Cardiac septum (tissue), 1 donor: ENCODE measurements at regions of chr14 and their contacts with region 1.

Region 1: DNA sequence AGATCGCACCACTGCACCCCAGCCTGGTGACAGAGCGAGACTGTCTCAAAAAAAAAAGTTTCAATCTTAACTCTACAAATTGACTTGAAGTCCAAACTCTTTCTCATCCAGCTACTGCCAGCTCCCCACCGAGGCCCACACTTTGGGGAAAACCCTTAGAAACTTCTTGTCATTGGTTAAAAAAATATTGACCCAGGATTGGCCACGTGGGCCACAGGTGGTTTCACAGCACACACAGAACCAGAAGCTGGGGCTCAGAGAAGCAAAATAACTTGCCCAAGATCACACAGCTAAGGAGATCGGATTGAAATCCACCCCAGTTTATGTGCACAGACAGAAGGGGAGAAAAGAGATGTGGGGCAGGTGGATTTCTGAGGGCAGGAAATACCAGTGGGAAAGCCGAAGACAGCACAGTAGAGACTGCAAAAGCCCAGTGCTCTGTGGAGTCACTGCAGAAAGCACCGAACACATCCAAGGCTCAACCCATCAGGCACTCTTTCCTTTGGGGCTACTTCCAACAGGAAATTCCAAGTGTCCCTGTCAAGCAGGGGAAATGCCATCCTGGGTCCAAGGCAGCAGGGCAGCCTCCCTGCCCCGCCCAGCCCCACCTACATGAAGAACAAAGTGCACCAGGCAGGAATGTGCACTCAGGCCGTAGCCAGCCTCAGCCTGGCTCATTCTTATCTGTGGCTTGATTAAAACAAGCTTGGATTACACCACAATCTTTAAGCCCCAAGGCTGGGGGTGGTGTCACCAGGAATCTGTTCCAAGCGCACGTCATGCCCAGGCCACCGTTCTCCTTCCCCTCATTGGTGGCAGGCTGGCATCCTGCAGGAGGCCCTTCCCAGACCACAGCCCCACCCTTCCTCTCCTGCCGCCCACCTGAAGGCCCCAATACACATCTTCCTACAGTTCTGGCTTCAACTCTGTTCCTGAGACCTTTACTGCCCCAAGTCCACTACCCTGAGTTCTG is 72.5 kb downstream of the ITPK1 start:
- DNase-seq: peak; percentile 82

Region 2: GRCh38 chr14:92973261-92973797 is 69.9 kb before region 1 on chr14:
- intact Hi-C with region 1: loop called (anchors 5 kb)
- DNase-seq: peak; percentile 85

Region 3: GRCh38 chr14:93090826-93091555 is 47.7 kb after region 1 on chr14:
- intact Hi-C with region 1: loop called (anchors 5 kb)
- DNase-seq: no peak